ENCODE measurements at regions of chr18 and their contacts with region 1.

Region 1: GRCh38 chr18:3447895-3448837 is 1.8 kb upstream of the TGIF1 start:
- DNase-seq: peak; percentile 94 to 99
- H3K4me3 ChIP-seq: peak overlapping the region; percentile 51
- CTCF ChIP-seq: no peak
- POLR2A ChIP-seq: peak in 1 of 2 donors; percentile 12

Region 2: GRCh38 chr18:3279201-3280185 is 168.7 kb before region 1 on chr18:
- intact Hi-C with region 1: loop called (anchors 10 kb)
- DNase-seq: no peak
- H3K4me3 ChIP-seq: no peak overlapping the region
- CTCF ChIP-seq: no peak
- POLR2A ChIP-seq: no peak

Region 3: GRCh38 chr18:3593904-3594661 is 145.9 kb after region 1 on chr18:
- intact Hi-C with region 1: loop called (anchors 5 kb)
- DNase-seq: peak; percentile 93 to 98
- H3K4me3 ChIP-seq: peak overlapping the region; percentile 0
- CTCF ChIP-seq: peak in 1 of 3 donors; percentile 73
- POLR2A ChIP-seq: peak in 1 of 2 donors; percentile 3

Measured in lower leg skin (tissue), 4 donors.